Panc1 (cell line): ENCODE measurements at regions of chr22 and their contacts with region 1.

Region 1: DNA sequence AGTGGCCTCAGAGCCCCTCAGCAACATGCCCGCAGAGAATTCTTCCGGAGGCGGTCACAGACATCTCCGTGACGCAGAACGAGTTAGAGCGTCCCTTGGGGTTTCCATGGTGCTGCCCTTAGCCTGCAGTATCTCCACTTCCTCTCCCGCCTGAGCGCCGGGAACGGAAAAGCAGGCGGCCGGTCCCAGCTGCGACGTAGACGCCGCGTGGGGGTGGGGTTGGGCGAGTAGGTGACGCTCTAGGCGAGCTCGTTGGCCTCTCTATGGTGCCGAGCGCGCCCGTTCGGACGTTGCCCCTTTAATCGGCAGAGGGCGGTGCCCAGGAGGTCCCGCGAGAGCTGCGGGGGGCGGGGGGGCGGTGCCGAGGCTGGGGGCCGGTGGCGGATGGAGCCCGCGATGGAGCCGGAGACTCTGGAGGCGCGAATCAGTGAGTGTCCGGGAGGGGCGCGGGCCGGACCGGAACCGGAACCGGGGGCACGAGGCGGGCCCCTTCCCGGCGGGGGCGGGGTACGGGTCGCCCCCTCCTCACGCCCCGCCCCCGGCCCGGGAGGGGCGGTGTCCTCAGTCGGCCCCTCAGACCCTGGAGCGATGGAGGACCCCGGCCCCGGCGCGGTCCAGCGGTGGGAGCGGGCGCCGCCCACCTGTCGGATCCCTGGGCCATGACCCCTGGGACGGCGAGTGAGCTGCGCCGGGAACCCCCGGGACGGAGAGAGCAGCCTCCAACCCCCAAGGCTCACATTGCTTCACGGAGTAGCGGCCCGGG is at the start of gene GGA1:
- DNase-seq: peak; percentile 84
- ATAC-seq: peak; percentile 93
- H3K4me3 ChIP-seq: peak within 1 kb of the TSS; percentile 68 to 74
- H3K27ac ChIP-seq: peak within 1 kb of the TSS; percentile 94
- H3K4me1 ChIP-seq: peaks cover 3% of the 10 kb centered on the region
- H3K27me3 ChIP-seq: no peaks in the 10 kb centered on the region
- CTCF ChIP-seq: no peak
- total RNA-seq, gene GGA1: 45.4 TPM

Region 2: DNA sequence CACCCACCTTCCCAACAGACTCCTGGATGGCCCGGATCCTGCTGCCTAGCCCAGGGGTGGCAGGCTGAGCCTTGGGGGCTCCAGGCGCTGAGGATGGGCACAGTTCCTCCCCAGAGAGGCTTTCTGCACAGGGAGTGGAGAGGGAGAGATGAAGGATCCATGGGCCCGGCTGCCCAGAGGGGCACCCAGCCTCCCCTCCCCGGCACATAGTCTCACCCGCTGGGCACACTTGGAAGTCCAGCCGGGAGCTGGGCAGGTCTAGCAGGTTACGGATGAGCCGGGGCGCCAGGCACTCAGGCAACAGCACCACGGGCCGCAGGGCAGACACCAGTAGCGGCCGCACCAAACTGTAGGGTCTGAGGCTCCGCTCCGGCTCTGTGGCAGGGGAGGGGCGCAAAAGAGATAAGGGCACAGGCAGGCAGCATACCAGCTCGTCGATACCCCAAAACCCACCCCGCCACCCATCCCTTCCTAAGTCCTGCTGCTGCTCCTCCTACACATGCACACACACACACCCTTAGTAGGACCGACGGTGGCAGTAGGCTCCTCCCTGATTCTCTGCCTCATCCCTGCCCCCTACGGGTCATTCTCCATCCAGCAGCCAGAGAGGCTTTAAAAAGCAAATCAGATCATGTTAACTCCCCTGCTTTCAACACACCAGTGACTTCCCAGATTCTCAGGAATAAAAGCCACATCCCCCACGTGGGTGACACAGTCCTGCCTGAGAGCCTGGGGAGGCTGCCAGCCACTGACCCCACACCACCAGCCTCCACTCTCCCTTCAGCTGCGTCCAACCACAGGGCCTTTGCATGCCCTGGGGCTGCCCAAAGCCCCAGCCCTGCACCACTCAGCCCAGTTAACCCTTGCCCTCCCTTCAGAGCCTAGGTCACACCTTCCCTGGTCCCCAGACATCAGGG is 116.0 kb before region 1 on chr22:
- CTCF ChIA-PET with region 1: no interaction called
- POLR2A ChIA-PET with region 1: no interaction called
- in situ Hi-C with region 1: no loop called
- intact Hi-C with region 1: no loop called
- DNase-seq: no peak
- ATAC-seq: peak; percentile 69
- H3K4me3 ChIP-seq: no peak overlapping the region
- H3K27ac ChIP-seq: peak overlapping the region; percentile 34; the same call in 1 of the 2 replicates
- H3K4me1 ChIP-seq: peaks cover 24% of the 10 kb centered on the region
- H3K27me3 ChIP-seq: no peaks in the 10 kb centered on the region
- CTCF ChIP-seq: no peak; the same call in none of the 2 replicates

Region 3: GRCh38 chr22:37696657-37697537 is 88.2 kb after region 1 on chr22 and contains the start of gene TRIOBP:
- CTCF ChIA-PET with region 1: interaction called, 13 read pairs
- POLR2A ChIA-PET with region 1: no interaction called
- in situ Hi-C with region 1: no loop called
- intact Hi-C with region 1: no loop called
- DNase-seq: no peak
- ATAC-seq: peak; percentile 72; the same call in 1 of the 2 replicates
- H3K4me3 ChIP-seq: peak within 1 kb of the TSS in 1 of 2 experiments; percentile 21; a peak in 1 of 4 replicates
- H3K27ac ChIP-seq: no peak within 1 kb of the TSS
- H3K4me1 ChIP-seq: no peaks in the 10 kb centered on the region
- H3K27me3 ChIP-seq: no peaks in the 10 kb centered on the region
- CTCF ChIP-seq: no peak
- total RNA-seq, gene TRIOBP: 50.5 TPM

Region 4: DNA sequence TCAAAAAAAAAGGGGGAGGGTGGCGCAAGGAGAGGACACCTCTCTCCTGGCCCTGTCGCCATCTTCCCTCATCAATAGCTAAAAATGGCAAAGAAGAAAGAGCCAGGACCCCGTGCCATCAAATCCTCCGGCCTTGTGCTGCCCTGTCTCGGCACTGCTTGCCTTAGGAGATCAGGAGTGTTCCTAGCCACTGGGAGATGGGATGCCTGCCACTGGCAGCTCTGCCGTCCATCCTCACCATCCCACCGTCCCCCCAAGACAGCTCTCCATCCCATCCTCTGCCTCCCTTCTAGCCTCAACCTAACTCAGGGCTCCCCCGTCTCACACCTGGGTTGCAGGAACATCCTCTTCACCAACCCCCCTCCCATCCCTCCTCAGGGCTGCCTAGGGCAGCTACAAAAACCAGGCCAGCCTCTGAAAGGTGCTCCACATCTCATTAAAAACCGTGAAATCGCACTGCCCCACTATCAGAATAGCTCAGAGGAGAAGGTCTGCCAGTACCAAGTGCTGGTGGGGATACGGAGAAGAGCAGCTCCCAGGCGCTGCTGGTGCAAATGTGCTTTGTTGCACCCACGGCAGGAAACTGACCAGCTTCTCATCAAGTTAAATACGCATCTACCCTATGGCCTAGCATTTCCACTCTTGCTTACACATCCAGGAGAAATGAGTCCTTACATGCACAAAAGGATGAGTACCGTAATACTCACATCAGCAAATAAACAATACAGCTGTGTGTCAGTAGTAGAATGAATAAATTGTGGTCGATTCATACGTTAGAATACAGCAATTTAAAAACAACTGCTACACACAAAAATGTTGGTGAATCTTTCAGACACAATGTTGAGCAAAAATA is 167.4 kb after region 1 on chr22:
- CTCF ChIA-PET with region 1: interaction called, 5 read pairs
- POLR2A ChIA-PET with region 1: interaction called, 10 read pairs
- in situ Hi-C with region 1: no loop called
- intact Hi-C with region 1: no loop called
- DNase-seq: no peak
- ATAC-seq: peak; percentile 29
- H3K4me3 ChIP-seq: no peak overlapping the region
- H3K27ac ChIP-seq: no peak overlapping the region
- H3K4me1 ChIP-seq: peaks cover 7% of the 10 kb centered on the region
- H3K27me3 ChIP-seq: no peaks in the 10 kb centered on the region
- CTCF ChIP-seq: no peak